ENCODE measurements at regions of chr11 and their contacts with region 1.

Region 1: GRCh38 chr11:83185767-83186166 is 7.7 kb upstream of the ANKRD42 start:
- DNase-seq: no peak
- ATAC-seq: no peak
- H3K4me3 ChIP-seq: no peak overlapping the region
- H3K4me3 Mint-ChIP-seq: no peak overlapping the region
- H3K27ac ChIP-seq: no peak overlapping the region
- H3K27ac Mint-ChIP-seq: no peak overlapping the region
- H3K4me1 ChIP-seq: no peaks in the 10 kb centered on the region
- H3K4me1 Mint-ChIP-seq: peaks cover 15% of the 10 kb centered on the region
- H3K27me3 ChIP-seq: no peaks in the 10 kb centered on the region
- H3K27me3 Mint-ChIP-seq: no peaks in the 10 kb centered on the region
- CTCF ChIP-seq: no peak

Region 2: GRCh38 chr11:82080160-82080559 is 1105.6 kb before region 1 on chr11:
- CTCF ChIA-PET with region 1: no interaction called
- POLR2A ChIA-PET with region 1: no interaction called
- intact Hi-C with region 1: no loop called
- DNase-seq: no peak
- ATAC-seq: no peak
- H3K4me3 ChIP-seq: no peak overlapping the region
- H3K4me3 Mint-ChIP-seq: no peak overlapping the region
- H3K27ac ChIP-seq: no peak overlapping the region
- H3K27ac Mint-ChIP-seq: no peak overlapping the region
- H3K4me1 ChIP-seq: no peaks in the 10 kb centered on the region
- H3K4me1 Mint-ChIP-seq: no peaks in the 10 kb centered on the region
- H3K27me3 ChIP-seq: peaks cover 0 to 2% of the 10 kb centered on the region in 2 experiments
- H3K27me3 Mint-ChIP-seq: peaks cover 14% of the 10 kb centered on the region
- CTCF ChIP-seq: no peak

Region 3: GRCh38 chr11:83162377-83162776 is 23.4 kb before region 1 on chr11:
- CTCF ChIA-PET with region 1: interaction called, 3 read pairs
- POLR2A ChIA-PET with region 1: interaction called, 5 read pairs
- intact Hi-C with region 1: loop called in 1 of 2 experiments (anchors 2 kb)
- DNase-seq: peak in 2 of 9 experiments; percentile 57 to 73
- ATAC-seq: peak; percentile 46
- H3K4me3 ChIP-seq: no peak overlapping the region
- H3K4me3 Mint-ChIP-seq: peak overlapping the region; percentile 68
- H3K27ac ChIP-seq: peak overlapping the region in 1 of 2 experiments; percentile 97
- H3K27ac Mint-ChIP-seq: peak overlapping the region; percentile 83
- H3K4me1 ChIP-seq: peaks cover 34% of the 10 kb centered on the region
- H3K4me1 Mint-ChIP-seq: peaks cover 70% of the 10 kb centered on the region
- H3K27me3 ChIP-seq: no peaks in the 10 kb centered on the region
- H3K27me3 Mint-ChIP-seq: no peaks in the 10 kb centered on the region
- CTCF ChIP-seq: no peak

Region 4: DNA sequence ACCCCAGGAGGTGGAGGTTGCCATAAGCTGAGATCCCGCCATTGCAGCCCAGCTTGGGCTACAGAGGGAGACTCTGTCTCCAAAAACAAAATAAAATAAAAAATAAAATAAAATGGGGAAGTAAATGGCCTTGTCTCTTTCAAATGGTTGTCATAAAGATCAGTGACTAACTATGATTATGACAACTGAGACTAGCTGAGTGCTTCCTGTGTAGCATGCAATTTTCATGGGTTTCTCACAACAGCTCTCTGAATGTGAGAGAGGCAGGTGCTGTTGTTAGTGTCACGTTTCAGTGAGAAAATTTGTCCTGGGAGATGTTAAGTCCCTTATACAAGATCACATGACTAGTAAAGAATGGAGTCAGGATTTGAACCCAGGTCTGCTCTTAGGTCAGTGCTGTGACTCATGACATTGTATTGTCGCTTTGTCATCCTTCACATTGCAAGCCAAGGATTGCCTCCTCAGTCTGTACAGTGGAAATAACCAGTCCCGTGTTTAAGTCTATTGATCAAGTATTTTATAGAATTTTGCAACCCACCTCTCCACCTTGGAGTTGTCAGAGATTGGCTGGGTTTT is 263.7 kb after region 1 on chr11:
- CTCF ChIA-PET with region 1: no interaction called
- POLR2A ChIA-PET with region 1: no interaction called
- intact Hi-C with region 1: no loop called
- DNase-seq: no peak
- ATAC-seq: no peak
- H3K4me3 ChIP-seq: no peak overlapping the region
- H3K4me3 Mint-ChIP-seq: no peak overlapping the region
- H3K27ac ChIP-seq: no peak overlapping the region
- H3K27ac Mint-ChIP-seq: no peak overlapping the region
- H3K4me1 ChIP-seq: no peaks in the 10 kb centered on the region
- H3K4me1 Mint-ChIP-seq: no peaks in the 10 kb centered on the region
- H3K27me3 ChIP-seq: no peaks in the 10 kb centered on the region
- H3K27me3 Mint-ChIP-seq: peaks cover 3% of the 10 kb centered on the region
- CTCF ChIP-seq: no peak

Measured in CD8-positive, alpha-beta T cell (primary cell).